IMR-90 (cell line): ENCODE measurements at regions of chr4 and their contacts with region 1.

Region 1: DNA sequence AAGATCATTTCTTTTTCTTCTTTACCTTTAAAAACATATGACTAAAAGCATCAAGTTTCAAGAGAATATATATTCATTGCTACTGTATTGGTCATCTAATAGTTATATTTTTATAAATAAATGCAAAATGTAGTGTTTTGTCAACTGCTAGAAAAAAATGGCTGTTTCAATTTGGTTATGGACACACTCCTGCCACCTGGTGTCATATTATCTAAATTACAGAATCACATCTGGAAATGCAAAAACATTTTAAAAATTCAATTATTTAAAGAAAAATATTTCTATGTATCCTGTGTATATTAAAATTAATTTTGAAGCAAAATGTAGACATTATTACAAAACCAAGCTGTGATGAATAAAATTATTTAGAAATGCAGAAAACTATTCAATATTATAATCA is 329.4 kb upstream of the PCDH18 start:
- DNase-seq: peak; percentile 29
- ATAC-seq: 0 out of 2 replicates have a peak, but pooled peaks have one; percentile 37
- H3K4me3 ChIP-seq: no peak overlapping the region
- H3K27ac ChIP-seq: no peak overlapping the region
- H3K4me1 ChIP-seq: peaks cover 4% of the 10 kb centered on the region
- H3K27me3 ChIP-seq: no peaks in the 10 kb centered on the region
- CTCF ChIP-seq: peak; percentile 62
- POLR2A ChIP-seq: no peak
- RAD21 ChIP-seq: peak; percentile 61

Region 2: DNA sequence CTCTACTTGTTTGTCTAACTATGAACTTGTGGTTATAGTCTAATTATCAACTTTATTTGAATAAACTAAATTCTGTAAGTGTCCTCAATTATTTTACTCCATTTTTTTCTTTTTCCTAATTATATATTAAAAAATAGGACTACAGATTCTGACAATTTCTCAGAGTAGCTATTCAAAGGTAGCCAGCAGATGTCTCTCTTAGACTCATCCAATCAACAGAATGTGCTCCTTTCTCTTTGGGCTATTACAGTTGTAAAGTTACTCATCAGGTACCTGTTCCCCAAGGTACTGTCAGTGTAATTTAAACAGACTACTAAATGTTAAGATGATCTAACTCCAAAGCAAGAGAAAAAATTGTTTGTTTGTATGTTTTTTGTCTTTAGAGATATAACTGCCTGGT is 577.9 kb before region 1 on chr4:
- CTCF ChIA-PET with region 1: no interaction called
- POLR2A ChIA-PET with region 1: no interaction called
- dilution Hi-C with region 1: no loop called
- in situ Hi-C with region 1: no loop called
- intact Hi-C with region 1: loop called (anchors 5 kb)
- DNase-seq: peak; percentile 39
- ATAC-seq: peak; percentile 63; the same call in 1 of the 2 replicates
- H3K4me3 ChIP-seq: no peak overlapping the region
- H3K27ac ChIP-seq: no peak overlapping the region
- H3K4me1 ChIP-seq: no peaks in the 10 kb centered on the region
- H3K27me3 ChIP-seq: no peaks in the 10 kb centered on the region
- CTCF ChIP-seq: peak; percentile 56
- POLR2A ChIP-seq: no peak
- RAD21 ChIP-seq: peak; percentile 55

Region 3: DNA sequence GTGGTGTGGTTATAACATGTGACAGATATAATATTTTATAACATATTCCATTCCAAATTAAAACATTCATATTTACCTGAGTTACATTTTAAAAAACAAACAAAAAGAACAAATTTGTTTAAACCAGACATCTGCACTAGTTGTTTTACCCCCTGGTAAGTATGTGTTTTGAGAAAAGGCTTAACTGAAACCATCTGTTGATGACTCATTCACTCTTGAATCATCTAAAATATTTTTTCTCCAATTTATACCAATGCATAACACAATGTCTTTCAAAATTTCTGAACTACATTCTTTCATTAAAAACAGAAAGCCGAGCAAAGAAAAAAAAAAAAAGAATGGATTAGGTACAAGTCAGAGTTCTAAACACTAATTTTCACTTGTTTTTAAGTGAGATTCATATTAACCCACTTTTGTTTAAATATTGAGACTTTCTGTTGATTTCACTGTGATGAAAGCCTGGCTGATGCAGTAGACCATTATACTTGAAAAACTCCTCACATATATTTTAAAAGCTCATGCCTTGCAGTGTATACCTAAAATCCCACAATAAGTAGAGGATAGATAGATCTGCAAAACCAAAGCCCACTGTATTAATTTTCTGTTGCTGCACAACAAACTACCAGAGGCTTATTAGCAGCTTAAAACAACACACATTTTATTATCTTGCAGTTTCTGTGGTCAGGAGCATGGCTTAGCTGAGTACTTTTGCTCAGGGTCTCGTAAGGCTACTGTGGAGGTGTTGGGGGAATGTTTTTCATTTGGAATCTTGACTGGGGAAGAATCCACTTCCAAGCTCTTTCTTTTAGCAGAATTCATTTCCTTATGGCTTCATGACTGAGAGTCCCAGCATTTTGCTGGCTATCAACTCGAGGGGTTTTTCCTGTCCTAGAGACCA is 550.8 kb before region 1 on chr4:
- CTCF ChIA-PET with region 1: no interaction called
- POLR2A ChIA-PET with region 1: interaction called, 14 read pairs
- dilution Hi-C with region 1: no loop called
- in situ Hi-C with region 1: no loop called
- intact Hi-C with region 1: no loop called
- DNase-seq: peak; percentile 91
- ATAC-seq: peak; percentile 72
- H3K4me3 ChIP-seq: no peak overlapping the region
- H3K27ac ChIP-seq: peak overlapping the region; percentile 98
- H3K4me1 ChIP-seq: peaks cover 10% of the 10 kb centered on the region
- H3K27me3 ChIP-seq: no peaks in the 10 kb centered on the region
- CTCF ChIP-seq: no peak
- POLR2A ChIP-seq: no peak
- RAD21 ChIP-seq: no peak

Region 4: DNA sequence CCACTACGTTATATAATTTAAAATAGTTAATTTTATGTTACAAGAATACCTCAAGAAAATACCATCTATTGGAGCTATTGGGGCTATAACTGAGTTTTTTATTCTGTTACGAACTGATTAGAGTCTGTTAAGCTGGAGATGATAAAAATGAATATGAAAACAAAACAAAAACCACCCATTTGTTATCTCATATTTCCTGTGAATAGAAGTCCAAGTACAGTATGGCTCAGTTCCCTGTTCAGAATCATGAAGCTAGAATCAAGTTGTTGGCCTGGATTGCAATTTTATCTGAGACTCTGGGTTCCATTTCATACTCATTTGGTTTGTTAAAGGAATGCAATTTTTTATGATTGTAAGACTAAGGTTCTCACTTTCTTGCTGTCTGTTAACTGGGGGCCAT is 10.2 kb before region 1 on chr4:
- CTCF ChIA-PET with region 1: no interaction called
- POLR2A ChIA-PET with region 1: no interaction called
- dilution Hi-C with region 1: no loop called
- in situ Hi-C with region 1: no loop called
- intact Hi-C with region 1: no loop called
- DNase-seq: no peak
- ATAC-seq: no peak
- H3K4me3 ChIP-seq: no peak overlapping the region
- H3K27ac ChIP-seq: no peak overlapping the region
- H3K4me1 ChIP-seq: no peaks in the 10 kb centered on the region
- H3K27me3 ChIP-seq: no peaks in the 10 kb centered on the region
- CTCF ChIP-seq: no peak
- POLR2A ChIP-seq: no peak
- RAD21 ChIP-seq: no peak

Region 5: GRCh38 chr4:137961051-137961438 is 99.4 kb after region 1 on chr4:
- CTCF ChIA-PET with region 1: no interaction called
- POLR2A ChIA-PET with region 1: interaction called, 15 read pairs
- dilution Hi-C with region 1: no loop called
- in situ Hi-C with region 1: no loop called
- intact Hi-C with region 1: no loop called
- DNase-seq: no peak
- ATAC-seq: peak; percentile 70
- H3K4me3 ChIP-seq: no peak overlapping the region
- H3K27ac ChIP-seq: peak overlapping the region; percentile 3; the same call in 1 of the 2 replicates
- H3K4me1 ChIP-seq: 0 out of 2 replicates have a peak, but pooled peaks cover 3% of the 10 kb centered on the region
- H3K27me3 ChIP-seq: no peaks in the 10 kb centered on the region
- CTCF ChIP-seq: no peak
- POLR2A ChIP-seq: no peak
- RAD21 ChIP-seq: no peak

Region 6: GRCh38 chr4:138135610-138136009 is 273.9 kb after region 1 on chr4:
- CTCF ChIA-PET with region 1: no interaction called
- POLR2A ChIA-PET with region 1: no interaction called
- dilution Hi-C with region 1: no loop called
- in situ Hi-C with region 1: no loop called
- intact Hi-C with region 1: no loop called
- DNase-seq: no peak
- ATAC-seq: no peak; the same call in 1 of the 2 replicates
- H3K4me3 ChIP-seq: no peak overlapping the region
- H3K27ac ChIP-seq: no peak overlapping the region
- H3K4me1 ChIP-seq: no peaks in the 10 kb centered on the region; the same call in 1 of the 2 replicates
- H3K27me3 ChIP-seq: no peaks in the 10 kb centered on the region
- CTCF ChIP-seq: no peak
- POLR2A ChIP-seq: no peak
- RAD21 ChIP-seq: no peak